ENCODE measurements at regions of chr10 and their contacts with region 1.

Region 1: GRCh38 chr10:110901954-110902819 is 16.8 kb downstream of the BBIP1 start:
- DNase-seq: no peak
- ATAC-seq: no peak
- H3K4me3 Mint-ChIP-seq: no peak overlapping the region
- H3K27ac Mint-ChIP-seq: no peak overlapping the region
- H3K4me1 Mint-ChIP-seq: peaks cover 23% of the 10 kb centered on the region
- H3K27me3 Mint-ChIP-seq: no peaks in the 10 kb centered on the region

Region 2: DNA sequence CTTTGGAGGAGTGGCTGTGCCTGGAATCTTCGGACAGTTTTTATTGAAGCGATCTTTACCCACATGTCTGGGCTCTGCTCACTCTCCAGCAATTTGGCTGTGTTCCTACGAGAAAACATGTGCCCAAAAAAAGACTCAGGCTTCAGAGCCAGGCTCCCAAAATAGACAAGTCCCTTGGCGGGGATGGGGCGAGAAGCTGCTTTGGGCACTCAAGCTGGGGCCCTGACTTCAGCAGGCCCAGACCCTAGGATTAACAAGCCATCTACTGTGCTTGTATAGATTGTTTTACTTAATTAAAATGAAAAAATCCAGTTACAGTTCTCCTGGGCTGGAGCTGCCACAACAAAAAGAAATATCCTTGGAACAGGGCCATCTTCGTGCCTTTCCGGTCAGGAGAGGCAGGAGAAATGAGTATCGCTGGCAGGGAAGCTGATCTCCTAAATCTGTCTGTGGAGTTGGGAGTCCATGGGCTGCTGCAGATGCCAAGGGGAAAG is 81.8 kb before region 1 on chr10:
- CTCF ChIA-PET with region 1: no interaction called
- POLR2A ChIA-PET with region 1: no interaction called
- DNase-seq: no peak
- ATAC-seq: no peak
- H3K4me3 Mint-ChIP-seq: no peak overlapping the region
- H3K27ac Mint-ChIP-seq: no peak overlapping the region
- H3K4me1 Mint-ChIP-seq: peaks cover 29% of the 10 kb centered on the region
- H3K27me3 Mint-ChIP-seq: no peaks in the 10 kb centered on the region

Region 3: DNA sequence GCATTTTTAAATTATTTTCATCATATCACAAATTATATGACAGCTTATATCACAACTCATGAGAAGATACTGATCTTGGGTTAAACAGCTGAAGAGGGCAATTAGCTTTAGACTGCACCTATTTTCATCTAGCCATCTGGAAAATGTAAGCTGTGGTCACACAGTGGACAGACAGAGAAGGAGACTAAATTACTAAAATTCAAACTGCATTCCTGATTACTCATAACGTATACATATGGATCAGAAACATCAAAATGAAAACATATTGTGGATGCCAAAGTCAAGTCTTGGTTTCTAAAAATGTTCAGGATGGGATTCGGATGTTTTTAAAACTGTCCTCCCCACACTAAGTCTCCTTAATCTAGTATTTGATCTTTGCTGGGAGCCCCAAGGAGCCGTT is 10.2 kb after region 1 on chr10:
- CTCF ChIA-PET with region 1: interaction called, 10 read pairs
- POLR2A ChIA-PET with region 1: interaction called, 12 read pairs
- DNase-seq: no peak
- ATAC-seq: no peak
- H3K4me3 Mint-ChIP-seq: no peak overlapping the region
- H3K27ac Mint-ChIP-seq: no peak overlapping the region
- H3K4me1 Mint-ChIP-seq: peaks cover 11% of the 10 kb centered on the region
- H3K27me3 Mint-ChIP-seq: no peaks in the 10 kb centered on the region

Region 4: GRCh38 chr10:110918643-110919363 is 16.6 kb after region 1 on chr10 and contains the start of gene BBIP1:
- CTCF ChIA-PET with region 1: interaction called, 10 read pairs
- POLR2A ChIA-PET with region 1: interaction called, 12 read pairs
- DNase-seq: no peak
- ATAC-seq: peak; percentile 95
- H3K4me3 Mint-ChIP-seq: peak within 1 kb of the TSS; percentile 89
- H3K27ac Mint-ChIP-seq: peak within 1 kb of the TSS; percentile 99
- H3K4me1 Mint-ChIP-seq: peaks cover 36% of the 10 kb centered on the region
- H3K27me3 Mint-ChIP-seq: no peaks in the 10 kb centered on the region
- total RNA-seq, gene BBIP1: 20.7 to 21.1 TPM